ENCODE measurements at regions of chr11 and their contacts with region 1.

Region 1: DNA sequence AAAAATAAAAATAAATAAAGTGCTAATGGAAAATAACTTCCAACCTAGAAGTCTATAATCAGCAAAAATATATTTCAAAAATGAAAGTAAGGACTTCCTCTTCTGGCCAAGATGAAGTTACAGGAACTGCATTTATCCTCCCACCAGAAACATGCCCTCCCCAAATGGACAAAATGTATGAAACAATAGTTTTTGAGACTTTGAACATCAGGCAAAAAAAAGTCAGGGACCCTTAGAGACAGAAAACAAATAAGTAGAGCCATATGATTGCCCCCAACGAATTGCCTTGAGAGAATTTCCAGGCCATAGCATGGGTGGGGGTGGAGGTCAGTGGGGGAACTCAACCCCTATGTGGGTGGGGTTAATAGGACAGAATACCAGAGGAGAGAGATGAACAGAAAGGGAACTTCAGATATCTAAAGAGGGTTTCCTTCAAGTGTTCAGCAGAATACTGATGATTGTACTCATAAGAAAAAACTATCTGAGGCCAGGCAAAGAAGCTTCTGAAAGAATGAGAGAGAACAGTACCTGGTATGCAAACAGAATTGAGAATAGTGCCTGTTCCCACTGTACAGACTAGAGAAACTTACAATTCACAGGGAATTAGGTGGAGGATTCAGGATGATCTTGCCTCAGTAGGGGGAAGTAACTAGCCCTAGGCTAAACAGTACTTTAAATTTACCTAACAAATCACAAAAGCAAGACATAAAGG is 26.6 kb upstream of the IL10RA start:
- DNase-seq: no peak
- ATAC-seq: peak; percentile 47
- H3K4me3 Mint-ChIP-seq: peak overlapping the region; percentile 0
- H3K27ac Mint-ChIP-seq: peak overlapping the region; percentile 64
- H3K4me1 Mint-ChIP-seq: peaks cover 23% of the 10 kb centered on the region
- H3K27me3 Mint-ChIP-seq: no peaks in the 10 kb centered on the region
- CTCF ChIP-seq: no peak

Region 2: GRCh38 chr11:117458275-117458674 is 501.3 kb before region 1 on chr11:
- CTCF ChIA-PET with region 1: no interaction called
- POLR2A ChIA-PET with region 1: no interaction called
- intact Hi-C with region 1: no loop called
- DNase-seq: no peak
- ATAC-seq: peak; percentile 50
- H3K4me3 Mint-ChIP-seq: no peak overlapping the region
- H3K27ac Mint-ChIP-seq: no peak overlapping the region
- H3K4me1 Mint-ChIP-seq: peaks cover 4% of the 10 kb centered on the region
- H3K27me3 Mint-ChIP-seq: no peaks in the 10 kb centered on the region
- CTCF ChIP-seq: no peak

Region 3: GRCh38 chr11:117834068-117834810 is 125.4 kb before region 1 on chr11:
- CTCF ChIA-PET with region 1: no interaction called
- POLR2A ChIA-PET with region 1: interaction called, 11 read pairs
- intact Hi-C with region 1: no loop called
- DNase-seq: no peak
- ATAC-seq: no peak
- H3K4me3 Mint-ChIP-seq: no peak overlapping the region
- H3K27ac Mint-ChIP-seq: no peak overlapping the region
- H3K4me1 Mint-ChIP-seq: peaks cover 24% of the 10 kb centered on the region
- H3K27me3 Mint-ChIP-seq: peaks cover 10% of the 10 kb centered on the region
- CTCF ChIP-seq: no peak

Region 4: GRCh38 chr11:117851106-117851505 is 108.5 kb before region 1 on chr11:
- CTCF ChIA-PET with region 1: no interaction called
- POLR2A ChIA-PET with region 1: no interaction called
- intact Hi-C with region 1: no loop called
- DNase-seq: no peak
- ATAC-seq: no peak
- H3K4me3 Mint-ChIP-seq: no peak overlapping the region
- H3K27ac Mint-ChIP-seq: no peak overlapping the region
- H3K4me1 Mint-ChIP-seq: no peaks in the 10 kb centered on the region
- H3K27me3 Mint-ChIP-seq: peaks cover 31% of the 10 kb centered on the region
- CTCF ChIP-seq: no peak

Region 5: DNA sequence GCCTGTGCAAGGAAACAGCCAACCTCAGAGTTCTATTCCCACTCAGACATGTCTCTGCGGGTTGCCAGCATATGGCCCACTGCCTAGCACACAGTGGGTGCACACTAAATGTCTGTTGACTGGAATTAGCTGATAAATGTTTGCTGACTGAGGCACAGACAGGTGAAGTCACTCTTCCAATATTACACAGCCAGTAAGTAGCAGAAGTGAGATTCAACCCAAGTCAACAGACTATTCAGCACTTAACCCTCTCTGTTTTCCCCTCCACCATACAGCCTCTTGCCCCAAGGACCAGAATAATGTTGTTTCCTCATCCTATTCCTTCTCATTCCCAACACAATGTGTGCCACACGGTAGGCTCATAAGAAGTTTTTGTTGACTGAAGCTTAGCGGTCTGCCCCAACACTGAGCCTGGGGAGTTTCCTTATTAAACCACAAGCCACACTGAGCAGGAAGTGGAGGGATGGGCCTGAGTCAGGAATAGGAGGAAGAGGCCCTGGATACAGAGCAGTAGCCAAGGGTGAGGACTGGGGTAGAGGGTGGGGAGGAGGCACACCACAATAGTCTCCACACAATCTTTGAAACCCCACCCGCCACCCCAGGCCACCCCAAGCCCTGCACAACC is 10.9 kb after region 1 on chr11:
- CTCF ChIA-PET with region 1: no interaction called
- POLR2A ChIA-PET with region 1: interaction called, 930 read pairs
- intact Hi-C with region 1: loop called (anchors 2 kb)
- DNase-seq: no peak
- ATAC-seq: peak; percentile 69
- H3K4me3 Mint-ChIP-seq: no peak overlapping the region
- H3K27ac Mint-ChIP-seq: no peak overlapping the region
- H3K4me1 Mint-ChIP-seq: peaks cover 26% of the 10 kb centered on the region
- H3K27me3 Mint-ChIP-seq: no peaks in the 10 kb centered on the region
- CTCF ChIP-seq: no peak

Region 6: DNA sequence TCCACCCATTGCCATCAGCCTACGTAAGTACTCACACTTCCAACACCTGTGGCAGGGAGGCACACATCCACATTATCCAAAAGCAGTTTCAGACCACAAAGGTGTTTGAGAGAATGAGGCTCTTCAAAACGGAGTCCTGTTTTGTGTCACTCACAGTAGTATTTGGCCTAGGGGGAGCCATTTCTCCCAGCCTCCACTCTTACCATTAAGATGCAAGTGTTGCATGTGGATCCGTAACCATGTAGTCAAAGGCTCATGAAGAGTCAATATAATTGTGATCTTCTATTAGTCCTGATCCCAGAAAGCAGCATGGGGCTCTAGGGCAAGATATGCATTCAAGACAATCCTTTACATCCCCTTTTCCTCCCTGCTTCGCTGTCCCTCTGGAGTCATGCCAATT is 68.1 kb after region 1 on chr11:
- CTCF ChIA-PET with region 1: no interaction called
- POLR2A ChIA-PET with region 1: interaction called, 13 read pairs
- intact Hi-C with region 1: no loop called
- DNase-seq: no peak
- ATAC-seq: no peak
- H3K4me3 Mint-ChIP-seq: no peak overlapping the region
- H3K27ac Mint-ChIP-seq: no peak overlapping the region
- H3K4me1 Mint-ChIP-seq: peaks cover 20% of the 10 kb centered on the region
- H3K27me3 Mint-ChIP-seq: no peaks in the 10 kb centered on the region
- CTCF ChIP-seq: no peak

Region 7: DNA sequence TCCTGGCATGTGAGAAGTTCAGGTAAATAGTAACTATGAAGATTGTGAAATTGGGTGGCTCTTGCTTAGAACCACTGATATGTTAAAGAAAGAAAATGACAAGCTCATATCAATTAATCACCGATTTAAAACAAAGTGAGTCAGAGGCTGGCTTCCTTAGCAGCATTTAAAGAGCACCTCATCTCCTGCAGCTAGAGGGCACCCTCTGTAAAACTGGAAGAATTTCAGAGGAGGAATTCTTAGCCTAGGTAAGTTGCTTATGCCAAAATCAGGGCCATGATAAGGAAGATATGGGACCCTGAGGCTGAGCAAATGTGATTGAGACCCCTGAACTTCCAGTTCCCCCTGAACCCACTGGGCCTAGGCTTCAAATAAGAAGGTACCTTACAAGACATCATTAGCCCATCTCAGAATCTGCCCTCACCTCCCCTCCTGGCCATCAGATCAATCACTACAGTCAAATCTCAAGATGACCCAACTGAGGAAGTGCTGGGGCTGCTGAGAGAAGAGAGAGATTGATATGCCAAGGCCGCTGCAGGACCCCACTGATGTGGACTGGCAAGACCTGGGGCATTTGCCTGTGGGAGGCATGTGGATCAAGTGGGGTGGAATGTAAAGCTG is 336.4 kb after region 1 on chr11:
- CTCF ChIA-PET with region 1: no interaction called
- POLR2A ChIA-PET with region 1: no interaction called
- intact Hi-C with region 1: no loop called
- DNase-seq: no peak
- ATAC-seq: peak; percentile 34
- H3K4me3 Mint-ChIP-seq: no peak overlapping the region
- H3K27ac Mint-ChIP-seq: no peak overlapping the region
- H3K4me1 Mint-ChIP-seq: no peaks in the 10 kb centered on the region
- H3K27me3 Mint-ChIP-seq: peaks cover 11% of the 10 kb centered on the region
- CTCF ChIP-seq: peak; percentile 44

Region 8: DNA sequence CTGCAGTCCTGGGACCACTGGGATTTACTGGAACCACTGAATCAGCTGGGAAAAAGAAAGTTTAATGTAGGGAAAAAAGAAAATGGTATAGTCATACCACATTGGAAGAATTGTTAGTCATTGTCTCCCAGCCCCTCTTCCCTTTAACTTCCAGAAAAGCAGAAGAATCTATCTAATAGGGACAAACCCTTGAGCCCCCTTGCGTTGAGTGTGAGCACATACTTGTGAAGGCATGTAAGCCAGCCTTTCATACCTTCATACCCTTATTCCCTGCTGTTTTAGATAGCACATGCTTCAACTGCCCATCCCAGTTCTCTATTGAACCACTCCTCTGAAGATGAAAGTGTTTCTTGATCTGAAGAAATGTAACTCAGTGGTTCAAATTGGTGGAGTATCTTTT is 713.3 kb after region 1 on chr11:
- CTCF ChIA-PET with region 1: no interaction called
- POLR2A ChIA-PET with region 1: interaction called, 10 read pairs
- intact Hi-C with region 1: no loop called
- DNase-seq: no peak
- ATAC-seq: no peak
- H3K4me3 Mint-ChIP-seq: no peak overlapping the region
- H3K27ac Mint-ChIP-seq: no peak overlapping the region
- H3K4me1 Mint-ChIP-seq: no peaks in the 10 kb centered on the region
- H3K27me3 Mint-ChIP-seq: peaks cover 38% of the 10 kb centered on the region
- CTCF ChIP-seq: no peak